Heart left ventricle (tissue), 16 donors: ENCODE measurements at regions of chr7 and their contacts with region 1.

Region 1: GRCh38 chr7:135672560-135673359 is 10.4 kb downstream of the STMP1 start:
- DNase-seq: peak in 1 of 5 donors; percentile 25
- ATAC-seq: peak; percentile 73 to 81 (median 77)
- H3K4me3 ChIP-seq: no peak overlapping the region
- H3K27ac ChIP-seq: peak overlapping the region in 10 of 12 donors; percentile 12 to 60 (median 36)
- H3K4me1 ChIP-seq: peaks cover 0 to 57% (median 30%) of the 10 kb centered on the region in 12 donors
- H3K27me3 ChIP-seq: no peaks in the 10 kb centered on the region
- CTCF ChIP-seq: peak; percentile 66 to 85 (median 80)
- POLR2A ChIP-seq: no peak

Region 2: GRCh38 chr7:135745703-135746312 is 73.0 kb after region 1 on chr7:
- intact Hi-C with region 1: loop called in 3 of 10 experiments (anchors 5 kb)
- DNase-seq: peak in 4 of 5 donors; percentile 57 to 75 (median 65)
- ATAC-seq: peak in 3 of 4 donors; percentile 57 to 67 (median 59)
- H3K4me3 ChIP-seq: peak overlapping the region in 4 of 12 donors; percentile 0 to 60 (median 48)
- H3K27ac ChIP-seq: peak overlapping the region in 10 of 12 donors; percentile 17 to 89 (median 69)
- H3K4me1 ChIP-seq: peaks cover 3 to 53% (median 20%) of the 10 kb centered on the region in 12 donors
- H3K27me3 ChIP-seq: no peaks in the 10 kb centered on the region
- CTCF ChIP-seq: no peak
- POLR2A ChIP-seq: no peak

Region 3: GRCh38 chr7:135757719-135758411 is 85.1 kb after region 1 on chr7:
- intact Hi-C with region 1: loop called in 6 of 10 experiments (anchors 5 to 10 kb)
- DNase-seq: peak in 4 of 5 donors; percentile 41 to 59 (median 51)
- ATAC-seq: peak; percentile 27 to 55 (median 44)
- H3K4me3 ChIP-seq: peak overlapping the region in 10 of 12 donors; percentile 11 to 44 (median 27)
- H3K27ac ChIP-seq: peak overlapping the region; percentile 36 to 89 (median 74)
- H3K4me1 ChIP-seq: peaks cover 0 to 45% (median 8%) of the 10 kb centered on the region in 12 donors
- H3K27me3 ChIP-seq: no peaks in the 10 kb centered on the region
- CTCF ChIP-seq: no peak
- POLR2A ChIP-seq: peak in 1 of 2 donors; percentile 11

Region 4: DNA sequence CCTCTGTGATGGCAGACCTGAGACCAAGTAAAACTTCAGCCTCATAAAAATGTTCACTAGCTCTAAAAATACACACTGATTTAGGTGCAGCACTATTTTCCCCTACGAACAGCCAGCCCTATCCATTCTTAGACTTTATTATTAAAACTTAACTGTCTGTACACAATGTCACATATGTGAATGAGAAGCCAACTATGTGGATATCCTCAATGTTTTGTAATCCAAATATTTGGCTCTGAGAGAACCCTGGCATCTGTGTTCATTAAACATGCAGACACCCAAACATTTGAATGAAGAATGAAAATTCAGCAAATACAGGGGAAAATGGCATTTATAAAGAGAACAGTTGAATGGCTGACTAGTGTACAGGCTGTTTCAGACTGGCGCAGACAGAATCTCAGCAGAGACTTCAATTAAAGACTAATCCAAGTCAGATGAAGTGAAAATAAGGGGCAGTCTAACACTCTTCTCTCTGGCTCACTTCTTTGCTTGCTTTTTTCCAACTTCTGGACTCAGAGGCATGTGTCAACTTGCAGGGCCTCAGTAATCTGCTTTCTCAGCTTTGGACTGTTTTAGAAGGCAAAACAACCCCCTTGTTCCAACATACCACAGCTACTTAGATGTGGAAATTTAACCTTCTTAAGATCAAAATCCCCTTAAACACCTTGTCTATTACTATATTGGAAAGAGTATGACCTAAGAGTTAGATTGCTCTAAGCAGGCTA is 123.2 kb after region 1 on chr7:
- intact Hi-C with region 1: loop called in 7 of 10 experiments (anchors 2 to 10 kb)
- DNase-seq: no peak
- ATAC-seq: no peak
- H3K4me3 ChIP-seq: no peak overlapping the region
- H3K27ac ChIP-seq: peak overlapping the region in 3 of 12 donors; percentile 22 to 53 (median 25)
- H3K4me1 ChIP-seq: peaks cover 0 to 16% (median 2%) of the 10 kb centered on the region in 12 donors
- H3K27me3 ChIP-seq: no peaks in the 10 kb centered on the region
- CTCF ChIP-seq: no peak
- POLR2A ChIP-seq: no peak

Region 5: GRCh38 chr7:136009488-136010079 is 336.8 kb after region 1 on chr7:
- intact Hi-C with region 1: loop called in 8 of 10 experiments (anchors 5 to 10 kb)
- DNase-seq: no peak
- ATAC-seq: no peak
- H3K4me3 ChIP-seq: no peak overlapping the region
- H3K27ac ChIP-seq: no peak overlapping the region
- H3K4me1 ChIP-seq: no peaks in the 10 kb centered on the region
- H3K27me3 ChIP-seq: no peaks in the 10 kb centered on the region
- CTCF ChIP-seq: peak; percentile 69 to 87 (median 81)
- POLR2A ChIP-seq: no peak